ENCODE measurements at regions of chr4 and their contacts with region 1.

Region 1: DNA sequence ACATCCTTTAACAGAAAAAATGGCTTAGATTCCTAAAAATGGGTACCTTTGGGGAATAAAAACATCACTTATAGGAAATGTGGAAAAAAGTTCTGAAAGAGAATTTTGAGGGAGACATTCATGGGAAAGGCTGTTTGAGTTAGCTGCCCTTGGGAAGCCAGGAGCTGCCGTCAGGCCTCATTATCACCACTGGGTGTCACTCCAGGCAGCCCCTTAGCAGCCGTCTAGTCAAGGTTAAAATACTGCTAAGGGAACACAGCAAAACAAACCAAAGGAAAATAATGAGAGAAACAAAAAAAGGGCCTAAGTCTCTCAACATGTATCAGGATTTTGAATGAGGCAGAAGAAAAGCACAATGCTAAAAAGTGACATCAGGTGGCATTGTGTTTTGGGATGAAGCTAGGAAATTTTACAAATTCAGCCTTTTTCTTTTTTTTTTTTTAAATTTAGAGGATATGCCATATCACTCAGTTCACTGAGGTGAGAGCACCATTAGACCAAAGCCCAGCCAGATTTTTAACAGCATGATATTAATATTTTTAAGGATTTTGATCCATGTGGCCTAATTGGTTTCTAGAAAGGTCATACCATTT is 235.3 kb downstream of the GPAT3 start:
- DNase-seq: peak; percentile 15
- H3K4me3 ChIP-seq: no peak overlapping the region
- H3K27ac ChIP-seq: no peak overlapping the region
- H3K27me3 ChIP-seq: no peaks in the 10 kb centered on the region
- CTCF ChIP-seq: peak; percentile 96

Region 2: DNA sequence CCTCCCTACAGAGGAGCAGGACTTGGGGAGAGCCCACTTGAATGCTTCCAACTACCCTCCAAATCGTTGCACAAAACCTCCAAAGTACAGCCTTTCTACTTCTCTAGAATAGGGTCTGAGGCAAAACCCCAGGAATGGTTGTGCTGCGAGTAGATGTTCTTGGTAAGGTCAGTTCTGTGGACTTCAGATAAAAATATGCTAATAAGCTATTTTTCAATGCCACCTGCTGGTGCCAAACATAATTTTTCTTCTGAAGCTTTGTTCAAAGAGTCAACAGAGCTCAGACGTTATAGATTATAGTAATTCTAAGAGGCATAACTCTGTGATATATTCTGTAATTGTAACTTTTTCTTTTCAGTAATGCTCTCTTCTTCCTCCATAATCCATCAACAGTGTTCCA is 190.4 kb after region 1 on chr4:
- CTCF ChIA-PET with region 1: interaction called, 130 read pairs
- POLR2A ChIA-PET with region 1: no interaction called
- DNase-seq: no peak
- H3K4me3 ChIP-seq: no peak overlapping the region
- H3K27ac ChIP-seq: no peak overlapping the region
- H3K27me3 ChIP-seq: peaks cover 2% of the 10 kb centered on the region
- CTCF ChIP-seq: peak; percentile 36

Region 3: GRCh38 chr4:83974156-83974780 is 203.1 kb after region 1 on chr4:
- CTCF ChIA-PET with region 1: interaction called, 17 read pairs
- POLR2A ChIA-PET with region 1: no interaction called
- DNase-seq: no peak
- H3K4me3 ChIP-seq: no peak overlapping the region
- H3K27ac ChIP-seq: no peak overlapping the region
- H3K27me3 ChIP-seq: peaks cover 2% of the 10 kb centered on the region
- CTCF ChIP-seq: no peak

Region 4: GRCh38 chr4:84258905-84259830 is 488.0 kb after region 1 on chr4:
- CTCF ChIA-PET with region 1: interaction called, 18 read pairs
- POLR2A ChIA-PET with region 1: no interaction called
- DNase-seq: no peak
- H3K4me3 ChIP-seq: no peak overlapping the region
- H3K27ac ChIP-seq: no peak overlapping the region
- H3K27me3 ChIP-seq: no peaks in the 10 kb centered on the region
- CTCF ChIP-seq: peak; percentile 84

Region 5: GRCh38 chr4:84298023-84298718 is 527.0 kb after region 1 on chr4:
- CTCF ChIA-PET with region 1: no interaction called
- POLR2A ChIA-PET with region 1: no interaction called
- DNase-seq: no peak
- H3K4me3 ChIP-seq: no peak overlapping the region
- H3K27ac ChIP-seq: no peak overlapping the region
- H3K27me3 ChIP-seq: no peaks in the 10 kb centered on the region
- CTCF ChIP-seq: no peak